Posterior cingulate gyrus (tissue), 11 donors: ENCODE measurements at regions of chr16 and their contacts with region 1.

Region 1: GRCh38 chr16:71412270-71413160 is 29.3 kb downstream of the TLE7 start:
- DNase-seq: peak in 8 of 10 donors; percentile 38 to 92 (median 72)

Region 2: DNA sequence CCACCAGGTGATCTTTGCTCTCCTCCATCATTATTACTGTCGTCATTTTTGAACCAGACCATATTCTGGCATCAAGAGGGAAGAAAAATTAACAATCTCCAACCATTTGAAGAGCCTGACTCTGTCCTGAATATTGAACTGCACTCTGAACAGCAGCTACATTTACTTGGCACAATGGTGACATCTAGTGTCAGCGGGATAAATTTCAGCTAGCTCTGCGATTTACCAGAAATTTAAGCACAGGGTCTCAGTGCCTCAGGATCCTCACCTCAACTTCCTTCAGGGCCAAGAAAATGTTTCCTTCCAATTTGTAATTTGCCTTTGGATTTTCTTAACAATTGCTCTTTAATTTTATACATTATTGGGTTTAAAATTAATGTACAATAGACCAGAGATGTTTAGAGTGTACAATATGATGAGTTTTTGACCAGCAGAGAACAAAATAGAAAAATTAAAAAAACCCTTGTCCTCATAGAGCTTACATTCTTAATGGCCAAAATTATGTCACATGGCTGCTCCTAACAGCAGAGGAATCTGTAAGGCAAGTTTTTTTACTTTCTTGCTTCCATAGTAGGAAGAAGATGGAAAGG is 87.4 kb after region 1 on chr16:
- intact Hi-C with region 1: loop called (anchors 1 kb)
- DNase-seq: peak in 4 of 10 donors; percentile 22 to 37 (median 26)

Region 3: GRCh38 chr16:71610936-71611871 is 198.7 kb after region 1 on chr16:
- intact Hi-C with region 1: loop called (anchors 1 kb)
- DNase-seq: peak; percentile 45 to 96 (median 79)

Region 4: DNA sequence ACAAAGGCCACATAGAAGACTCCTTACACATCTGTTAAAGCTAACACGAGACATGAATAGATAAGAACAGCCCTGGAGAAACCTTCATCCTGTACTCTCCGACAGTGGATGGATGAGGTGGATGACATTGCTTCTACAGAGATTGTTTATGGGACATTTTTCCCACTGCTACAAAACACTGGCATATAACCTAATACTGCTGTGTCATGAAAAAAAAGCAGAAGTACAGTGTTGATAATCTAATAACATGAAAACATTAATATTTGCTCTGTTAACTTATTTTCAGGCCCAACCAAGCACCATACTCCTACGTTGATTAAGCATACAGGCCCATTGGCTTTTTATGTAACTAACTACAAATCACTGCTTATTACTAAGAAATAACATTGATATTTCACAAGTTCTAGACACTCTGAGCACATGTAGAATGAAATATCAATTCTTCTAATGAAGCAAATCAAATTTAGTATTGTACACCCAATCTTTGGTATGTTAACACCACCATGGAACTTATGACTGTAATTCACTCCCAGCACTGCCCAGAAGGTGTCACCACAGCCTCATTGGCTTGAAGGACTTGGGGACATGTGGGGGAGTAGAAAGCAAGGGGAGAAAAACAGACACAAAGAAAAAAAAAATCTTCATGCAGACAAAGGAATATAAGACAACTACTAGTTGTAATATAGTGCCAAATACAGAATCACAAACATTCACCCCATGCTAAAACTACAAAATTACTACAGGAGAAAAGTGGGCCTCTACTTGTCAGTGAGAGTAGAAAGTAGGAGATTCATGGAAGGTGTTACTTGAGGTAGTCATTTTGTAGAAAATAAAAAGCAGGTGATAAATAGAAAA is 1089.5 kb after region 1 on chr16:
- intact Hi-C with region 1: no loop called
- DNase-seq: peak in 7 of 10 donors; percentile 14 to 91 (median 55)